Posterior vena cava (tissue), 2 donors: ENCODE measurements at regions of chr15 and their contacts with region 1.

Region 1: GRCh38 chr15:48861813-48862431 is 16.0 kb upstream of the EID1 start:
- DNase-seq: no peak

Region 2: GRCh38 chr15:48877630-48878595 is 16.0 kb after region 1 on chr15 and contains the start of gene EID1:
- intact Hi-C with region 1: no loop called
- DNase-seq: peak; percentile 98
- total RNA-seq, gene EID1: 202 to 230 TPM

Region 3: GRCh38 chr15:48963524-48964113 is 101.7 kb after region 1 on chr15 and contains the start of gene SHC4:
- intact Hi-C with region 1: loop called (anchors 10 kb)
- DNase-seq: peak; percentile 84
- total RNA-seq, gene SHC4: 6.2 to 9.7 TPM

Region 4: GRCh38 chr15:49155110-49155833 is 293.4 kb after region 1 on chr15 and contains the start of gene COPS2:
- intact Hi-C with region 1: loop called in 1 of 2 experiments (anchors 10 kb)
- DNase-seq: peak; percentile 97
- total RNA-seq, gene COPS2: 80.8 to 82.4 TPM

Region 5: GRCh38 chr15:49908236-49908932 is 1046.5 kb after region 1 on chr15:
- intact Hi-C with region 1: no loop called
- DNase-seq: no peak

Region 6: GRCh38 chr15:50145451-50145872 is 1283.5 kb after region 1 on chr15:
- intact Hi-C with region 1: loop called in 1 of 2 experiments (anchors 10 kb)
- DNase-seq: no peak